Pancreas (tissue), 10 donors: ENCODE measurements at regions of chr2 and their contacts with region 1.

Region 1: GRCh38 chr2:20781656-20782265 is 41.1 kb downstream of the LDAH start:
- DNase-seq: no peak
- ATAC-seq: peak in 2 of 4 donors; percentile 34 to 47
- H3K4me3 ChIP-seq: no peak overlapping the region
- H3K27ac ChIP-seq: no peak overlapping the region
- H3K4me1 ChIP-seq: no peaks in the 10 kb centered on the region
- H3K27me3 ChIP-seq: no peaks in the 10 kb centered on the region
- CTCF ChIP-seq: peak in 3 of 4 donors; percentile 6 to 27 (median 22)

Region 2: GRCh38 chr2:20507166-20507692 is 274.5 kb before region 1 on chr2:
- intact Hi-C with region 1: no loop called
- DNase-seq: no peak
- ATAC-seq: no peak
- H3K4me3 ChIP-seq: no peak overlapping the region
- H3K27ac ChIP-seq: no peak overlapping the region
- H3K4me1 ChIP-seq: no peaks in the 10 kb centered on the region
- H3K27me3 ChIP-seq: no peaks in the 10 kb centered on the region
- CTCF ChIP-seq: no peak

Region 3: GRCh38 chr2:20953145-20953824 is 171.5 kb after region 1 on chr2:
- intact Hi-C with region 1: loop called in 1 of 3 experiments (anchors 10 kb)
- DNase-seq: no peak
- ATAC-seq: no peak
- H3K4me3 ChIP-seq: no peak overlapping the region
- H3K27ac ChIP-seq: no peak overlapping the region
- H3K4me1 ChIP-seq: no peaks in the 10 kb centered on the region
- H3K27me3 ChIP-seq: no peaks in the 10 kb centered on the region
- CTCF ChIP-seq: no peak

Region 4: GRCh38 chr2:21123473-21124393 is 342.0 kb after region 1 on chr2 and contains the start of gene TDRD15:
- intact Hi-C with region 1: no loop called
- DNase-seq: peak in 1 of 6 donors; percentile 47
- ATAC-seq: no peak
- H3K4me3 ChIP-seq: no peak within 1 kb of the TSS
- H3K27ac ChIP-seq: no peak within 1 kb of the TSS
- H3K4me1 ChIP-seq: no peaks in the 10 kb centered on the region
- H3K27me3 ChIP-seq: peaks cover 0 to 2% (median 0%) of the 10 kb centered on the region in 4 donors
- CTCF ChIP-seq: no peak
- total RNA-seq, gene TDRD15: not detected